ENCODE measurements at regions of chr2 and their contacts with region 1.

Region 1: DNA sequence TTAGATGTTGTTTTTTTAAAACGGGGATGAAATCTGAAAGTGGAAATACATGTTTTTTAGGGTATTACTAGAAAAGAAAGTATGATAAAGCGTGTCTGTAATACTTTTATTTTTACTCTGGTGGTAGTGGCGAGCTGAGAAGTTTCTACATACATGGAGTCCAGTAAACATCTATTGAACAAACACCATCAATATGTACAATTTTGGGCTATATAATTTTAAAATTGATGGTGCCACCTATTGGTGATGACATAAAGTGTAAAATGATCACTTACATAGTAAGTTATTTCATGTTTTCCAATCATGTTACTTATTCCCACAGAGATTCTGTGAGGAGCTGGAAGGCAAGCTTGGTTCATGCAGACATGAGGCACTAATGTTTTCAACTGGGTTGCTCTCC is 31.5 kb upstream of the NFE2L2 start:
- DNase-seq: no peak
- H3K4me3 ChIP-seq: no peak overlapping the region
- H3K27ac ChIP-seq: no peak overlapping the region
- H3K27me3 ChIP-seq: no peaks in the 10 kb centered on the region
- CTCF ChIP-seq: peak; percentile 36

Region 2: GRCh38 chr2:177281400-177282180 is 14.4 kb before region 1 on chr2:
- CTCF ChIA-PET with region 1: interaction called, 15 read pairs
- POLR2A ChIA-PET with region 1: no interaction called
- DNase-seq: no peak
- H3K4me3 ChIP-seq: no peak overlapping the region
- H3K27ac ChIP-seq: peak overlapping the region; percentile 58
- H3K27me3 ChIP-seq: no peaks in the 10 kb centered on the region
- CTCF ChIP-seq: no peak

Region 3: DNA sequence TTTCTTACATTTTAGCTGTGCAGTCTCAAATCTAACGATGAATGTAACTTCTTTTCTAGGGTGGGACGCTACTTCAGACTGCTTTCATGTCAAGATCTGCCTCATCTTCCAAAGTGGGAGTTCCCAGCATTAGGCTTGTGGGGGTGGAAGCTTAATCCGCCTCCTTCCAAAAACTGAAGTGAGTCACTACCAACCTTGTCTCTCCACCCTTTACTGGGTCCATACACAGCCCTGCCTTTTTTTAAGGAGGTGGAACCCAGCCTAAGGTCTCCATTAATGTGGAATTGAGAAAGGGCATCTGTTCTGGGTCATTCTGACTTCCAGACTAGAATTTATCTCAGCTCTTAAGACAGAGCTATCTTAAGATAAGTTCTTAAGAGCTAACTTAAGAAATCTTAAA is 10.5 kb after region 1 on chr2:
- CTCF ChIA-PET with region 1: interaction called, 10 read pairs
- POLR2A ChIA-PET with region 1: no interaction called
- DNase-seq: no peak
- H3K4me3 ChIP-seq: no peak overlapping the region
- H3K27ac ChIP-seq: no peak overlapping the region
- H3K27me3 ChIP-seq: no peaks in the 10 kb centered on the region
- CTCF ChIP-seq: no peak